Activated CD4-positive, alpha-beta T cell treated with anti-CD3 and anti-CD28 coated beads, Interleukin-2, amount 10 ng/mL, durations not matched to agents 7 days and 5 days (primary cell): ENCODE measurements at regions of chr18 and their contacts with region 1.

Region 1: GRCh38 chr18:50268022-50268747 is 1.9 kb upstream of the CFAP53 start:
- DNase-seq: peak; percentile 75
- H3K4me3 Mint-ChIP-seq: peak overlapping the region; percentile 64
- H3K27ac Mint-ChIP-seq: peak overlapping the region; percentile 57
- H3K4me1 Mint-ChIP-seq: peaks cover 32% of the 10 kb centered on the region
- H3K27me3 Mint-ChIP-seq: peaks cover 9% of the 10 kb centered on the region

Region 2: GRCh38 chr18:50115095-50115494 is 153.1 kb before region 1 on chr18:
- CTCF ChIA-PET with region 1: no interaction called
- POLR2A ChIA-PET with region 1: no interaction called
- DNase-seq: no peak
- H3K4me3 Mint-ChIP-seq: no peak overlapping the region
- H3K27ac Mint-ChIP-seq: no peak overlapping the region
- H3K4me1 Mint-ChIP-seq: no peaks in the 10 kb centered on the region
- H3K27me3 Mint-ChIP-seq: peaks cover 19% of the 10 kb centered on the region

Region 3: DNA sequence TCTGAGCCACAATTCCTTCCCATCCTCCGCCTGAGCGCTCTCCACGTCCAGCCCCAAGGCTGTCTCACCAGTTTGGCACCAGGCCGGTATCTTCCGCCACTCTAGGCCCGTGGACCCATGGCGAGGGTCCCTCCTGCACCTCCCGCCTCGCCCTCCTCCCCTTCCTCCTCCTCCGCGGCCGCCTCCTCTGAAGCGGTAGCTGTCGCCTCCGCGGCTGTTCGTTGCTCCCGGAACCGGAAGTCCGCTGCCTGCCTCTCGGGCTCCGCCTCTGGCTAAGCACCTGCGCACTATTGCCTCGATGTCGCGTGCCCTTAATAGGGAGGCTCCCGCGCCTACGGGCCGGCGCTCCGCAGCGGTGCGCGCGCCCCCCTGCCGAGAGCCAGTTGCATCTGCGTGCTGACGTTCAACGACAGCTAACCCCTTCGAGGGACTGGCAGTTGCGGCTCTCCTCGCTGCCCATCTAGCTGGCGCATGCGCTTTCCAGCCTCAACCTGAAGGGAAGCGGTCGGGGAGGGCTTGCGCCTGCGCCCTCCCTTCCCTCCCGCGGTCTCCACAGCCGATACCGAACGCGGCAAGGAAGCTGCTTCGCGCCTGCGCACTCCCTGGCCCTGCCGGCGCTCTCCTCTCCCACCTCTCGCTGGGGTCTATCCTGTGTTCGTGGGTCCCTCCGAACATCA is 13.2 kb after region 1 on chr18 and contains the start of gene MBD1:
- CTCF ChIA-PET with region 1: interaction called, 18 read pairs
- POLR2A ChIA-PET with region 1: interaction called, 3 read pairs
- DNase-seq: peak; percentile 97
- H3K4me3 Mint-ChIP-seq: peak within 1 kb of the TSS; percentile 97
- H3K27ac Mint-ChIP-seq: peak within 1 kb of the TSS; percentile 95
- H3K4me1 Mint-ChIP-seq: peaks cover 49% of the 10 kb centered on the region
- H3K27me3 Mint-ChIP-seq: no peaks in the 10 kb centered on the region
- total RNA-seq, gene MBD1: 91.6 to 96.2 TPM